Dendritic cell treated with granulocyte-macrophage colony-stimulating factor and Interleukin-4, amounts not matched to agents 40 ng/mL and 50 ng/mL, for 4 days (primary cell): ENCODE measurements at regions of chr9 and their contacts with region 1.

Region 1: DNA sequence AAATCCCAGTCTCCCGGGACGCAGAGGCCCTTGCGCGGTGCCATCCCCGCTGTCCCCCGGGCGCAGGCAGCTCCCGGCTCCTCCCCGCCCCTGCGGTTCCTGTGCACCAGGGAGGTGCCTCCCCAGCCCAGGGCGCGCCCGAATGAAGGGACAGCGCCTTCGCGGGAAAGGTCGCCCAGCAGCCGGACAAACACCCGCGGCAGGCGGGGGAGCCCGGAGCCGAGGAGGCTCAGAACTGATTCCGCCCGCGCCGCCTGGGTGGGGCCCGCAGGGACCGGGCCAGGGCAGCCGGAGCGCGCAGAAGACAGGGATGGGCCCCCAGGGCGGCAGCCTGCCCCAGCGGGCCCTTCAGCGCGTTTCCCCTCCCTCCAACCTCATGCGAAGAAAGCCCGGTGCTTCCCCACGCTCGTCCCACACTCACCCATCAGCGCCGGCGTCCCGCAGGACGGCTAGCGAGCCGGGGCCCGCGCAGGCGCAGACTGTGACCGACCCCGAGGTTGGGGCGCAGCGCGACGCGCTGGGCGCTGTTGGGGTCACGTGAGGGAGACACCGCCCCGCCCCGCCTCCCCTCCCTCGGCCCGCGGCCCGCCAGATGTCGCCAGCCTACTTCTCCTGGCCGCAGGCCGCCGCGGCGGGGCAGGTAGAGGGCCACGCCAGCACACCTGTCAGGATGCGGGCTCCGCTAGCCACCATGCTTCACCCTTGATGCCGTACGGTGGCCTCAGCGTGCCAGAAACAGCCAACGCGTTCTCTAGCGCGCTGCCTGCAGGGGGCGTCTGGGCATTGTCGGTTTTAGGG is at the start of gene SLC25A51:
- H3K4me3 Mint-ChIP-seq: peak within 1 kb of the TSS; percentile 93
- H3K27ac Mint-ChIP-seq: peak within 1 kb of the TSS; percentile 90
- H3K4me1 Mint-ChIP-seq: peaks cover 28% of the 10 kb centered on the region
- H3K27me3 Mint-ChIP-seq: no peaks in the 10 kb centered on the region

Region 2: DNA sequence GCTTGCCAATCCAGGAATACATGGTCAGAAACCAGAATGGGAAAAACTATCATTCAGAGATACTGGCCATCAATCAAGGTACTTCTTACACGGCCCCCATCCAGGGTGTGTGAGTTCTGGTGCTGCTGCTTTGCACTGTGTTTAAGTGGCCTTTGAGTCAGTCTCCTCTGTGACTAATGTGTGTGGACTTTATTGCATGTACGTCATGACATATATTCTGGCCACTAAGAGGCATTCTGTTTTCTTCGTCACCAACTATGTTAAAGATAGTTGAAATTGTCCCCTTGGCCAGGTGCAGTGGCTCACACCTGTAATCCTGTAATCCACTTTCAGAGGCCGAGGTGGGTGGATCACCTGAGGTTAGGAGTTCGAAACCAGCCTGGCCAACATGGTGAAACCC is 127.5 kb before region 1 on chr9:
- intact Hi-C with region 1: no loop called
- H3K4me3 Mint-ChIP-seq: no peak overlapping the region
- H3K27ac Mint-ChIP-seq: no peak overlapping the region
- H3K4me1 Mint-ChIP-seq: no peaks in the 10 kb centered on the region
- H3K27me3 Mint-ChIP-seq: no peaks in the 10 kb centered on the region

Region 3: GRCh38 chr9:38392235-38393127 is 488.6 kb after region 1 on chr9 and contains the start of gene ALDH1B1:
- intact Hi-C with region 1: loop called (anchors 10 kb)
- H3K4me3 Mint-ChIP-seq: peak within 1 kb of the TSS; percentile 97
- H3K27ac Mint-ChIP-seq: peak within 1 kb of the TSS; percentile 88
- H3K4me1 Mint-ChIP-seq: peaks cover 33% of the 10 kb centered on the region
- H3K27me3 Mint-ChIP-seq: peaks cover 17% of the 10 kb centered on the region